Activated B cell treated with CpG ODN at 0.5 μM for 24 hours (primary cell): ENCODE measurements at regions of chr17 and their contacts with region 1.

Region 1: DNA sequence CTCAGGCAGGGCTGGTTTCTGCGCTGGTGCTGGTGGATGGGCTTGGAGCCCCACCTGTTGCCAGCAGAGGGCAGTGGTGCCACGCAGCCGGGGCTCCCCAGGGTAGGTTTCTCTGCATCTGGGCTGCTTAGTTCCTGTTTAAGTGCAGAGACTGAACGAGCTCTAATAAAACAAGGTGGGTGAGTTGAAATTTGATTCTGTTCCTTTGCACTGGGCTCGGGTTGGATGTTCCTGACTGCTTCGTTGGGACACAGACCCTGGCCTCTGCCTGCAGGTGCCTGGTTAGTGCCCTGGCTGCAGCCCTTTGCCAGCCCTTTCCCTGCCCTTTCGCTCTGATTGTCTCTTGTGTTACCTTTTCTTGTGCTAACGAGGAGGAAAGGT is 30.0 kb downstream of the TBCD start:
- DNase-seq: peak; percentile 85
- ATAC-seq: peak; percentile 100
- H3K4me3 Mint-ChIP-seq: no peak overlapping the region
- H3K27ac Mint-ChIP-seq: no peak overlapping the region
- H3K4me1 Mint-ChIP-seq: peaks cover 11% of the 10 kb centered on the region
- H3K27me3 Mint-ChIP-seq: no peaks in the 10 kb centered on the region
- CTCF ChIP-seq: peak; percentile 87

Region 2: GRCh38 chr17:82863941-82864774 is 82.3 kb after region 1 on chr17:
- CTCF ChIA-PET with region 1: interaction called, 17 read pairs
- POLR2A ChIA-PET with region 1: interaction called, 6 read pairs
- intact Hi-C with region 1: loop called (anchors 5 kb)
- DNase-seq: peak; percentile 61
- ATAC-seq: peak; percentile 88
- H3K4me3 Mint-ChIP-seq: peak overlapping the region; percentile 70
- H3K27ac Mint-ChIP-seq: peak overlapping the region; percentile 90
- H3K4me1 Mint-ChIP-seq: peaks cover 78% of the 10 kb centered on the region
- H3K27me3 Mint-ChIP-seq: peaks cover 3% of the 10 kb centered on the region
- CTCF ChIP-seq: no peak

Region 3: DNA sequence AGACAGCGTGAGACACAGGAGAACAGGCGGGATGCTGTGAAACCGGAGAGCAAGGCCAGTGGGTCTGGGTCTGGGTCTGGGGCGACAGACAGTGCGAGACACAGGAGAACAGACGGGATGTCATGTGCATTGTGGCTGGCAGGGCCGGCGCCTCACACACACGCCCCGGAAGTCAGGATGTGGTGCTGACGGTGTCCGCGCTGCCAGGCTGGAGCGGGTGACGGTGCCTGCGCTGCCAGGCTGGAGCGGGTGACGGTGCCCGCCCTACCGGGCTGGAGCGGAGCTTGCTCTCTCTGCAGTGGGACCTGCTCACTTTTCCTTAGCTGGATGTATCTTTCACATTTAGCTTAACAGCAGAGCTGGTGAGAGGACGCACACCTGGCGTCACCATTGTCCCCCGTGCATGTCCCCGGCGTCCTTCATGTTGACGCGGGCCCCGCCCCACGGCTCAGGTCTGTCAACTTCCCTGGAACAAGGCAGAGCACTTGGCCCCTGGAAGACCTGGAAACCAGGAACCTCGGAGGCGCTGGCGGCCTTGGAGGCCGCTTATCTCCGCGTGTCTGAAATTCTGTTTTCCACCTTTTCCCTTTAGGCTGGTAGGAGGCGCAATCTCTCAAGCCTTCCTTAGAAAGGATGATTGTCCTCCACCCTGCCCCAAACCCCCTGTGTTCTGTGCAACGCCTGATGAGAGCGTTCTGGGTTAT is 101.0 kb after region 1 on chr17:
- CTCF ChIA-PET with region 1: interaction called, 10 read pairs
- POLR2A ChIA-PET with region 1: no interaction called
- intact Hi-C with region 1: no loop called
- DNase-seq: no peak
- ATAC-seq: peak; percentile 47
- H3K4me3 Mint-ChIP-seq: peak overlapping the region; percentile 24
- H3K27ac Mint-ChIP-seq: no peak overlapping the region
- H3K4me1 Mint-ChIP-seq: peaks cover 55% of the 10 kb centered on the region
- H3K27me3 Mint-ChIP-seq: no peaks in the 10 kb centered on the region
- CTCF ChIP-seq: no peak

Region 4: DNA sequence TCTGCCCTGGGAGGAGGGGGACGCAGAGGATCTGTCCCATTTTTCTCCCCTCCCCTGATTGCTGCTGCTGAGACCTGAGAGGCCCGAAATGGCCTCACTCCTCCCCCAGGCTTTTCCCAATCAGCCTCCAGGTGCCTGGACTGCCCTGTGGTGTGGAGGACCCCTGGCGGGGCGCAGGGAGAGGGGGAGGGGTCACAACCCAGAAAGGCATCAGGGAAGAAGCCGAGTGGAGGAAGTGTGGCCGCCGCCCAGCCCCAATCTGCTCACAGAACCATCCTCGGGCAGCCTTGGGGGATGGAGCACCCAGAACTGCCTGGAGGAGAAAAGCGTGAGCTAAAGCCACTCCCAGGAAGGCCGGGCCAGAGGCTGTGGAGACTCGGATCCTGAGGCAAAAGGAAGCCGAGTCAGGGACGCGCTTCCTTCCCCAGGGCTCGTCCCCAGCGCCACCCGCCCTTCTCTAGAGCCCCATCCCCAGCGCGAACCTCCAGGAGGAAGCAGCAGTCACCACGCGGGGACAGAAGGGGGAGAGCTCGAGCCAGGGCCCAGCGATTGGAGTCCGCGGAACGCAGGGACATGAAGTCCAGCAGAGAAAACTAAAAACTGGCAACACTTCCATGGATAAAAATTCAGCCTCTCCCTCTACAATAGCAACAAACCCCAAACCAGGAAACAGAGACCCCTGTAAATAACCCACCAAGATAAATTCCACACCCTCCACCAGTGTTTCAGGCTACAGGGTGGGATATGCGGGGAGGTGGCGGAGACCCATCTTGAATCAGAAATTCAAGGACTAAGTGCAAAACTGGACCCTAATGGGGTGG is 181.2 kb after region 1 on chr17:
- CTCF ChIA-PET with region 1: interaction called, 3 read pairs
- POLR2A ChIA-PET with region 1: no interaction called
- intact Hi-C with region 1: loop called (anchors 1 kb)
- DNase-seq: peak; percentile 15
- ATAC-seq: peak; percentile 74
- H3K4me3 Mint-ChIP-seq: no peak overlapping the region
- H3K27ac Mint-ChIP-seq: no peak overlapping the region
- H3K4me1 Mint-ChIP-seq: peaks cover 23% of the 10 kb centered on the region
- H3K27me3 Mint-ChIP-seq: no peaks in the 10 kb centered on the region
- CTCF ChIP-seq: no peak

Region 5: DNA sequence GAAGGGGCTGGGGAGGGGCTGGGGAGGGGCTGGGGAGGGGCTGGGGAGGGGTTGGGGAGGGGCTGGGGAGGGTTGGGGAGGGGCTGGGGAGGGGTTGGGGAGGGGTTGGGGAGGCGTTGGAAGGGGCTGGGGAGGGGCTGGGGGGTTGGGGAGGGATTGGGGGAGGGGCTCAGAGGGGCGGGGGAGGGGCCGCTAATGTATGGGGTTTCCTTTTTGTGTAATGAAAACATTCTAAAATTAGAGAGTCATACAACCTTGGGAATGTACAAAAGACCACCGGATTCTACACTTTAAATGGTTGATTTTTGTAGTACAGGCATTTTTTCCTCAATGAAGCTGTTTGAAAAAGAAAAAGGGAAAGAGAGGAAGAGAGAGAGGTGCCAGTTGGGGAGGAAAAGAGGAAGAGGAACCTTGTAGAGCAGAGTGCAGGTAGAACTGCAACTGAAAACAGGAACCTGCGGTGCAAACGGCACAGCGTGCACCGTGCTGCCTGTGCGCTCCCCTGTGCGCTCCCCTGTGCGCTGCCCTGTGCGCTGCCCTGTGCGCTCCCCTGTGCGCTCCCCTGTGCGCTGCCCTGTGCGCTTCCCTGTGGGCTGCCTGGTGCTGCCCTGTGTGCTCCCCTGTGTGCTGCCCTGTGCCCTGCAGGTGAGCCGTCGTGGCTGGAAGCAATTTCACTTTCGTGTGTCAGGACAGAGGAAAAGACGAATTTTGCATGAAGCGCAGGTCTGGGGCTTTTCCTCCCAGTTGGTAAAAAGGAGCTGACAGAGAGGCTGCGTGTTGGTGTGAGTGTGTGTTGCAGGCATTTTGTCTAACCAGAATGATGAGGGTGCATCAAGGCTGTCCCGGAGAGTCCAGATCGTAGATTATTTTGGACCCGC is 338.3 kb after region 1 on chr17:
- CTCF ChIA-PET with region 1: no interaction called
- POLR2A ChIA-PET with region 1: no interaction called
- intact Hi-C with region 1: no loop called
- DNase-seq: peak; percentile 55
- ATAC-seq: peak; percentile 100
- H3K4me3 Mint-ChIP-seq: peak overlapping the region; percentile 52
- H3K27ac Mint-ChIP-seq: peak overlapping the region; percentile 59
- H3K4me1 Mint-ChIP-seq: peaks cover 35% of the 10 kb centered on the region
- H3K27me3 Mint-ChIP-seq: peaks cover 18% of the 10 kb centered on the region
- CTCF ChIP-seq: no peak

Region 6: DNA sequence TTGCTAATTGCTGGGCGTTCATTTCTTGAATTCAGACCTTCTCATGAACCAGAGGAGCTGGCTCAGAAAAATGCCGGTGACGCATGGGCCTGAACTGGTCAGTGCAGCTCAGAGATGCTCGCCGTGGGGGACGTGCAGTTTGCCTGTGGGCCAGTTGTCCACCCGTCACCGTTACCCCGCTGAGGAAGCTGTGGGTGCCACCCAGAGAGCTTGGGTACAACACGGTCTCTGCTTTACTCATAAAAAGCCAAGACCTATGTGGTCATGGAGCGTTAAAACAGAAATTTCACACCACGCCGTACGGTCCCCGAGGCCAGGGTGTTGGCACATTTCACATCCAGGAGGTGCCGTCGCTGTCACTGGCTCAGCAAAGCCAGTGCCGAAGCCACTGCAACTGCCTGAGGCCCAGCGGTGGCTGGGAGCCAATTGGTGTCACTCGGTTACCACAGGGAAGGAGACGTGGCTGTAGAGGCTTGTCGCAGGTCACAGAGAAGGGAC is 418.4 kb after region 1 on chr17:
- CTCF ChIA-PET with region 1: interaction called, 40 read pairs
- POLR2A ChIA-PET with region 1: interaction called, 3 read pairs
- intact Hi-C with region 1: no loop called
- DNase-seq: peak; percentile 41
- ATAC-seq: peak; percentile 51
- H3K4me3 Mint-ChIP-seq: peak overlapping the region; percentile 82
- H3K27ac Mint-ChIP-seq: peak overlapping the region; percentile 92
- H3K4me1 Mint-ChIP-seq: peaks cover 35% of the 10 kb centered on the region
- H3K27me3 Mint-ChIP-seq: no peaks in the 10 kb centered on the region
- CTCF ChIP-seq: no peak